HCT116 (cell line): ENCODE measurements at regions of chr7 and their contacts with region 1.

Region 1: DNA sequence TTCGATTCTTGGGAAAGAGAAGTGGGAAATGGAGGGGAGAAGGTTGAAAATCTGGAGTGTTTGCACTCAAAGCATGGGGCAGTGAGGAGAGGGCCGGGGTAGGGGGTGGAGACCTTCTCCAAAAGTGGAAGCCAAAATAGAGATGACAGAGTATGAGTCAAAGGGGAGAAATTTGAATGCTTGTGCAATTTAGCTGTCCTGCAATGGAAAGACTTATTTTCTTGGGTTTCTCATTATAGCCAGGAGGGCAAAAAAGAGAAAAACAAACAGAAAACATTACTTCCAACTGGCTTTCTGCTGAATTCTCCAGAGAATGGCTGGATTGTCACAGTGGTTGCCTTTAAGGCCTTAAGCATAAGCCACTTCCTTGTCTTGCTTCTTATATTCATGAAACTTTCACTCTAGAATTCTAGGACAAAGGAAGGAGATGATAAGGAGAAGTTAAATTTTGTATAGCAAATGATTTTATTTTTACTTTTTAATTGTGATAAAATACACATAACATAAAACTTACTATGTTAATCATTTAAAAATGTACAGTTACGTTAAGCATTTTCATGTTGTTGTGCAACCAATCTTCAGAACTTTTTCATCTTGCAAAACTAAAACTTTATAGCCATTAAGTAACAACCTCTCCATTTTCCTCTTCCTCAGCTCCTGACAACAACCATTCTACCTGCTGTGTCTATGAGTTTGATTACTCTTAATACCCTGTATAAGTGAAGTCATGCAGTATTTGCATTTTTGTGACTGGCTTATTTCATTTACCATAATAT is 100.2 kb downstream of the GPR85 start:
- DNase-seq: no peak
- ATAC-seq: no peak
- H3K4me3 ChIP-seq: no peak overlapping the region
- H3K27ac ChIP-seq: no peak overlapping the region
- H3K4me1 ChIP-seq: no peaks in the 10 kb centered on the region
- H3K27me3 ChIP-seq: no peaks in the 10 kb centered on the region
- CTCF ChIP-seq: no peak
- POLR2A ChIP-seq: no peak
- RAD21 ChIP-seq: no peak

Region 2: DNA sequence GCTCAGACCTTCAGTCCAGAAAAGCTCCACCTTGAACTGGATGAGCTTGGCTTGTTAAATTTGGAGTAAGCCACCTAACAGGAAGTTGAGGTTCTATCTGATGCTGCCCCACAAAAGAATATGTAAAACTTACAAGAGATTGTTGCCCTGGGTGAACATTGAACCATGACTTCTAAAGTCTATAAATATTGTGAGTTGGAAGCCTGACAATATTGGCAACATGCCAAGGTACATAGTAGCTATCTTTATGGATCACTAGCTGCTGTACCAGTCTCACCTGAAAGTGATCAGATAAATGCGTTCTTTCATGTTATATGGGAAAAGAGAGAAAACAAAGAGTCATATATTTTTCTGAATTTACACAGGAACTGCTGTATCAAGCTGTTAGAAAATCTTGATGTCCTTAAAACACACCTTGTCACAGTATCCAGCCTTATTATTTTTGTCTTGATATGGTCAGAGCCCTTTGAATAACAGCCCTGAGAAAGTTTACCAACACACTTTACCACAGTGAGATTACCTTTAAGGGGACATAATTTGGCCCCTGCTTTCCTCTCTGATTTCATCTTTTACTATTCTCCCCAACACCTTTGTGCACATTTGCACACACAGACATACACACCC is 413.7 kb before region 1 on chr7:
- CTCF ChIA-PET with region 1: no interaction called
- POLR2A ChIA-PET with region 1: no interaction called
- RAD21 ChIA-PET with region 1: no interaction called
- intact Hi-C with region 1: no loop called
- DNase-seq: no peak
- ATAC-seq: no peak
- H3K4me3 ChIP-seq: no peak overlapping the region
- H3K27ac ChIP-seq: no peak overlapping the region
- H3K4me1 ChIP-seq: no peaks in the 10 kb centered on the region
- H3K27me3 ChIP-seq: no peaks in the 10 kb centered on the region
- CTCF ChIP-seq: no peak
- POLR2A ChIP-seq: no peak
- RAD21 ChIP-seq: no peak

Region 3: GRCh38 chr7:112970771-112971170 is 15.7 kb before region 1 on chr7:
- CTCF ChIA-PET with region 1: no interaction called
- POLR2A ChIA-PET with region 1: no interaction called
- RAD21 ChIA-PET with region 1: no interaction called
- intact Hi-C with region 1: loop called (anchors 1 kb)
- DNase-seq: peak; percentile 4
- ATAC-seq: peak; percentile 94
- H3K4me3 ChIP-seq: no peak overlapping the region
- H3K27ac ChIP-seq: no peak overlapping the region
- H3K4me1 ChIP-seq: no peaks in the 10 kb centered on the region
- H3K27me3 ChIP-seq: no peaks in the 10 kb centered on the region
- CTCF ChIP-seq: peak in 2 of 3 experiments; percentile 34 to 41; a peak in 3 of 6 replicates
- POLR2A ChIP-seq: no peak
- RAD21 ChIP-seq: no peak